ENCODE measurements at regions of chr6 and their contacts with region 1.

Region 1: GRCh38 chr6:130282234-130282995 is 59.7 kb upstream of the SAMD3 start:
- DNase-seq: peak in 6 of 14 experiments; percentile 11 to 73 (median 53)
- ATAC-seq: peak; percentile 62
- H3K4me3 ChIP-seq: no peak overlapping the region
- H3K4me3 Mint-ChIP-seq: no peak overlapping the region
- H3K27ac ChIP-seq: no peak overlapping the region
- H3K27ac Mint-ChIP-seq: no peak overlapping the region
- H3K4me1 ChIP-seq: peaks cover 6% of the 10 kb centered on the region
- H3K4me1 Mint-ChIP-seq: peaks cover 9% of the 10 kb centered on the region
- H3K27me3 ChIP-seq: no peaks in the 10 kb centered on the region
- H3K27me3 Mint-ChIP-seq: no peaks in the 10 kb centered on the region
- CTCF ChIP-seq: peak; percentile 57

Region 2: DNA sequence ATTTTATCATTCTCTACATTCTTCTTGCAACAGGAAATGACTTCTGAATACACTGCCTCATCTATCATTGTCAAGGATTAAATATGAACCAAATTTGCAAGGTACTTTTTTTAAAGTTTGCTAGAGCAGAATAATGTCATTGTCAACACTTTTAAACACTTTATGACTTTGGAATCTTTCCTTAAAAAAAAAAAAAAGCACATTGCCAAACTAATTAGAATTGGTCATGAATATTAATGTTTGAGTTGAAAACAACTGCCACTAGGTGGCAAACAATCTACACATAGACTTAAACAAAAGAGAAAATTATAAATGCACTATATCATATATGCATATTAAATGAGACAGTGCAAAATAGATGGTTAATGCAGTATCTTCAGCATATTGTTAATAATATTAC is 388.8 kb before region 1 on chr6:
- CTCF ChIA-PET with region 1: no interaction called
- POLR2A ChIA-PET with region 1: no interaction called
- intact Hi-C with region 1: loop called in 1 of 2 experiments (anchors 10 kb)
- DNase-seq: peak in 3 of 14 experiments; percentile 46 to 48 (median 46)
- ATAC-seq: no peak
- H3K4me3 ChIP-seq: no peak overlapping the region
- H3K4me3 Mint-ChIP-seq: no peak overlapping the region
- H3K27ac ChIP-seq: no peak overlapping the region
- H3K27ac Mint-ChIP-seq: no peak overlapping the region
- H3K4me1 ChIP-seq: no peaks in the 10 kb centered on the region
- H3K4me1 Mint-ChIP-seq: no peaks in the 10 kb centered on the region
- H3K27me3 ChIP-seq: no peaks in the 10 kb centered on the region
- H3K27me3 Mint-ChIP-seq: peaks cover 6% of the 10 kb centered on the region
- CTCF ChIP-seq: peak; percentile 22

Region 3: GRCh38 chr6:130037207-130037811 is 245.1 kb before region 1 on chr6:
- CTCF ChIA-PET with region 1: interaction called, 3 read pairs
- POLR2A ChIA-PET with region 1: no interaction called
- intact Hi-C with region 1: loop called in 1 of 2 experiments (anchors 2 kb)
- DNase-seq: peak in 3 of 14 experiments; percentile 36 to 60 (median 56)
- ATAC-seq: peak; percentile 73
- H3K4me3 ChIP-seq: no peak overlapping the region
- H3K4me3 Mint-ChIP-seq: no peak overlapping the region
- H3K27ac ChIP-seq: no peak overlapping the region
- H3K27ac Mint-ChIP-seq: no peak overlapping the region
- H3K4me1 ChIP-seq: peaks cover 11% of the 10 kb centered on the region
- H3K4me1 Mint-ChIP-seq: peaks cover 76% of the 10 kb centered on the region
- H3K27me3 ChIP-seq: no peaks in the 10 kb centered on the region
- H3K27me3 Mint-ChIP-seq: no peaks in the 10 kb centered on the region
- CTCF ChIP-seq: peak; percentile 74

Region 4: GRCh38 chr6:130076512-130076911 is 205.9 kb before region 1 on chr6:
- CTCF ChIA-PET with region 1: no interaction called
- POLR2A ChIA-PET with region 1: no interaction called
- intact Hi-C with region 1: loop called (anchors 1 to 2 kb)
- DNase-seq: peak in 3 of 14 experiments; percentile 26 to 44 (median 28)
- ATAC-seq: no peak
- H3K4me3 ChIP-seq: no peak overlapping the region
- H3K4me3 Mint-ChIP-seq: no peak overlapping the region
- H3K27ac ChIP-seq: no peak overlapping the region
- H3K27ac Mint-ChIP-seq: peak overlapping the region; percentile 12
- H3K4me1 ChIP-seq: no peaks in the 10 kb centered on the region
- H3K4me1 Mint-ChIP-seq: peaks cover 21% of the 10 kb centered on the region
- H3K27me3 ChIP-seq: no peaks in the 10 kb centered on the region
- H3K27me3 Mint-ChIP-seq: no peaks in the 10 kb centered on the region
- CTCF ChIP-seq: peak; percentile 22

Region 5: DNA sequence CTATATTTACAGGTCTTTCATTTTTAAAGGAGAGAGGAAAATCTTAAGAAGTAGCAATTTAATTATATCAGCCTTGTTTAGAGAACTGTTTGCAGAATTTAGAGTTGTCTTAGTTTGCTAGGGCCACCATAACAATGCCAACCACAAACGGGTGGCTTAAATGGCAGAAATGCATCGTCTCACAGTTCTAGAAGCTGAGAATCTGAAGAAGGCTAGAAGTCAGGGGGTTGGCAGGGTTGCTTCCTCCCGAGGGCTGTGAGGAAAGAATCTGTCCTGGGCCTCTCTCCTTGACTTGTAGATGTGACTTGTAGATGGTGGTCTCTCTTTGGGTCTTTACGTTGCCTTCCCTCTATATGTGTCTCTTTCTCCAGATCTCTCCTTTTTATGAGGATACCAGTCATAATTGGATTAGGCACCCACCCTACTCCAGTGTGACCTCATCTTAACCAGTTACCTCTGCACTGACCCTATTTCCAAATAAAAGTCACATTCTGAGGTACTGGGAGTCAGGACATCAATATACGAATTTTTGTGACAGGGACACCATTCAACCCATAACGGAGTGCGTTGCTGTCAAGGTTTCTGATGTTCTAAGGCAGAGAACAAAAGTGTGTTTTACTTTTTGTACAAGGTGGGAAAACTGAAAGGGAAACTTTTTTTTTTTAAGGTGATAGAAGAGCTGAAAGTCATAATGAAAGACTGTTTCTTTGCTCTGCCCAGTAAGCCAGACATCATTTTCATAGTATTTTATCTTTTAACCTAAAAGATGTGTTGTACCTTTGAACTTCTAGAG is 144.1 kb before region 1 on chr6:
- CTCF ChIA-PET with region 1: no interaction called
- POLR2A ChIA-PET with region 1: interaction called, 4 read pairs
- intact Hi-C with region 1: loop called (anchors 1 to 5 kb)
- DNase-seq: peak in 2 of 14 experiments; percentile 16 to 52
- ATAC-seq: no peak
- H3K4me3 ChIP-seq: peak overlapping the region; percentile 23
- H3K4me3 Mint-ChIP-seq: peak overlapping the region; percentile 79
- H3K27ac ChIP-seq: peak overlapping the region; percentile 10 to 33
- H3K27ac Mint-ChIP-seq: peak overlapping the region; percentile 92
- H3K4me1 ChIP-seq: peaks cover 25% of the 10 kb centered on the region
- H3K4me1 Mint-ChIP-seq: peaks cover 82% of the 10 kb centered on the region
- H3K27me3 ChIP-seq: no peaks in the 10 kb centered on the region
- H3K27me3 Mint-ChIP-seq: no peaks in the 10 kb centered on the region
- CTCF ChIP-seq: no peak

Measured in CD4-positive, alpha-beta T cell (primary cell).